ENCODE measurements at regions of chr20 and their contacts with region 1.

Region 1: DNA sequence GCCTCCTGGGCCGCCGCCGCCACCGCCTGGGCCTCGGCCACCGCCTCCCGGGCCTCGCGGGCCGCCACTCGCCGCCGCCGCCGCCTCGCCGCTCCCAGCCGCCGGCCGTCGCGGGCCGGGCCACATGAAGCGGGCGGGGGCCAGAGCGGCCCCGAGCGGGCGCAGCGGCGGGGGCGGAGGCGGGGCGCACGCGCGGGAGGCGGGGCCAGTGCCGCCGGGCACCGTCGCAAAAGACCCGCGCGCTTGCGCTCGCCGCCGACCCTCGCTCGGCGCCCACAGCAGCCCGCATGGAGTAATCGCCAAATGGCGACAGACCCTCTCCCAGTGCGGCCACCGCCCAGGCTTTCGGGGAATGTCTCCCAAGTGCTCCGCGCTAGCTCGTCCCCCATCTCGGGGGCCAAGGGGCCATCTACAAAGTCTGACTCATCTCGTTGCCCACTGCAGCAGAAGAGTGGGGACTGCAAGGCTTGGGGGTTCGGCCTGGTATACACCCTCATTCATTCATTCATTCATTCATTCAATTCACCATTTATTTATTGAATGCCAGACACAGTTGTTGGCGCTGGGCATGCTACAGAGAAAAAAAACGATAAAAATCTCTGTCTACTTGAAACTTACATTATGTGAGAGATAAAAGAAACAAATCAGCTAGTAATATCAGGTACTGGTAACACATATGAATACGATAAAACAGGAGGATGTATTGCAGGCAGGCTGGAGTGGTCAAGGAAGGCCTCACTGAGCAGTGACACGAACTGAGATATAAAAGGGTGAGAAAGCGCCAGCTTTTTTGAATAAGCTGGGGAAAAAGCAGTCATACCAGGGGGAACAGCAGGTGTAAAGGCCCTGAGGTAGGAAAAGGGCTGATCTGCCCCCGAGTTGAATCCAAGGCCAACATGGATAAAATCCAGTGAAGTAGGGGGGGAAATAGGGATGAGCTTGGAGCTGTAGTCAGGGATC is at the start of gene B4GALT5:
- DNase-seq: peak; percentile 80
- ATAC-seq: peak; percentile 76
- H3K4me3 ChIP-seq: peak within 1 kb of the TSS; percentile 79 to 83
- H3K27ac ChIP-seq: peak within 1 kb of the TSS; percentile 95
- H3K4me1 ChIP-seq: peaks cover 42 to 50% of the 10 kb centered on the region in 2 experiments
- H3K27me3 ChIP-seq: no peaks in the 10 kb centered on the region
- CTCF ChIP-seq: no peak
- POLR2A ChIP-seq: peak; percentile 56
- RAD21 ChIP-seq: 0 out of 2 replicates have a peak, but pooled peaks have one; percentile 31
- total RNA-seq, gene B4GALT5: 92.5 TPM

Region 2: GRCh38 chr20:49676581-49677291 is 37.3 kb before region 1 on chr20:
- CTCF ChIA-PET with region 1: no interaction called
- POLR2A ChIA-PET with region 1: no interaction called
- RAD21 ChIA-PET with region 1: no interaction called
- intact Hi-C with region 1: loop called (anchors 5 kb)
- DNase-seq: no peak
- ATAC-seq: peak; percentile 43
- H3K4me3 ChIP-seq: peak overlapping the region in 1 of 2 experiments; percentile 49; a peak in 3 of 4 replicates
- H3K27ac ChIP-seq: peak overlapping the region; percentile 90
- H3K4me1 ChIP-seq: peaks cover 85 to 95% of the 10 kb centered on the region in 2 experiments
- H3K27me3 ChIP-seq: no peaks in the 10 kb centered on the region
- CTCF ChIP-seq: no peak
- POLR2A ChIP-seq: no peak
- RAD21 ChIP-seq: no peak

Region 3: GRCh38 chr20:49758781-49759180 is 44.7 kb after region 1 on chr20:
- CTCF ChIA-PET with region 1: no interaction called
- POLR2A ChIA-PET with region 1: no interaction called
- RAD21 ChIA-PET with region 1: no interaction called
- intact Hi-C with region 1: no loop called
- DNase-seq: no peak
- ATAC-seq: no peak
- H3K4me3 ChIP-seq: no peak overlapping the region
- H3K27ac ChIP-seq: no peak overlapping the region
- H3K4me1 ChIP-seq: 0 out of 4 replicates have a peak, but pooled peaks cover 0 to 10% of the 10 kb centered on the region in 2 experiments
- H3K27me3 ChIP-seq: no peaks in the 10 kb centered on the region
- CTCF ChIP-seq: no peak
- POLR2A ChIP-seq: no peak
- RAD21 ChIP-seq: no peak

Region 4: GRCh38 chr20:49785852-49786175 is 71.8 kb after region 1 on chr20:
- CTCF ChIA-PET with region 1: no interaction called
- POLR2A ChIA-PET with region 1: no interaction called
- RAD21 ChIA-PET with region 1: no interaction called
- intact Hi-C with region 1: loop called (anchors 5 kb)
- DNase-seq: no peak
- ATAC-seq: no peak
- H3K4me3 ChIP-seq: no peak overlapping the region
- H3K27ac ChIP-seq: no peak overlapping the region
- H3K4me1 ChIP-seq: peaks cover 0 to 14% of the 10 kb centered on the region in 2 experiments; a peak in 3 of 4 replicates
- H3K27me3 ChIP-seq: no peaks in the 10 kb centered on the region
- CTCF ChIP-seq: no peak
- POLR2A ChIP-seq: no peak
- RAD21 ChIP-seq: no peak

Region 5: DNA sequence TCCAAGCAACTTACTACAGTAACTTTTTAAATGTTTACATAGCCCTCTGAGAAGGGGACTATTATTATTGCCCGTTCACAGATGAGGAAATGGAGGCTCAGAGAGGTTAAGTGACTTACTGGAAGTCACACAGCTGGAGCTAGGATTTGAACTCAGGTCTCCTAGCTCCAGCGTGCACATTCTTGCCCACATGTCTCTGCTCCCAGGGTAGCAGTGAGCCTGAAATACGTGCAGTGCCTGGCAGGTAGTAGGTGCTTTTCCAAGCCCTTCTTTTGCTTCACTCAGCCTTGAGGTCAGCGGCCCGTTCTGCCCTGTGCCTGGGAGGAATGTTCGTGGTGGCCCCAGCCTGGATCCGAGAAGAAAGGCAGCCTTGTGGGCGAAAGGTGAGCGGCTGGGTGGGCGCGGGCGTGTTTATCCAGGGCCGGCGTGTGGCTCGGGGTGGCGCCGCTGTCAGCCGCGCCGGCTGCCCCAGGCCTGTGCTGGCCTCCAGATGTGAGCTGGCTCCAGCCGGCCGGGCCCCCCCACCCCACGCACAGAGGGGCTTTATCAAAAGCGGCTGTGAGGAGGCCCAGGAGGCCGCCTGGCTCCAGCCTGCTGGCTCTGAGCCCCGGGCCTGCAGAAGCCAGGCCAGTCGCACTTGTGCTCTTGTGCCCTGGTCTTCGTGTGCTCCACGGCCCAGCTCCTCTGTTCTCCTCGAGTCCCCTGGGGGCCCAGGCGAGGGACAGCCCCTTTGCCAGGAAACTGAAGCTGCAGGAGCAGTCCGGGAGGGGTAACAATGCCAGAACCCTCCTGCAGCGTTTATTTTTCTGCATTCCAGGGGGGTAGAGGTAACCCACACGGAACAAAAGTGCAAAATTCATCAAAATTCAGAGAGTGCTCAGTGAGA is 340.8 kb after region 1 on chr20:
- CTCF ChIA-PET with region 1: no interaction called
- POLR2A ChIA-PET with region 1: no interaction called
- RAD21 ChIA-PET with region 1: no interaction called
- intact Hi-C with region 1: no loop called
- DNase-seq: no peak
- ATAC-seq: no peak
- H3K4me3 ChIP-seq: no peak overlapping the region
- H3K27ac ChIP-seq: no peak overlapping the region
- H3K4me1 ChIP-seq: peaks cover 7 to 10% of the 10 kb centered on the region in 2 experiments
- H3K27me3 ChIP-seq: no peaks in the 10 kb centered on the region
- CTCF ChIP-seq: no peak
- POLR2A ChIP-seq: no peak
- RAD21 ChIP-seq: no peak

Measured in HCT116 (cell line).